ENCODE measurements at regions of chr1 and their contacts with region 1.

Region 1: GRCh38 chr1:39973503-39974135 is 18.7 kb downstream of the MFSD2A start:
- DNase-seq: peak; percentile 82
- ATAC-seq: peak; percentile 80
- H3K4me3 ChIP-seq: no peak overlapping the region
- H3K4me3 Mint-ChIP-seq: peak overlapping the region; percentile 14
- H3K27ac ChIP-seq: no peak overlapping the region
- H3K27ac Mint-ChIP-seq: no peak overlapping the region
- H3K4me1 ChIP-seq: peaks cover 5 to 7% of the 10 kb centered on the region in 2 donors
- H3K4me1 Mint-ChIP-seq: peaks cover 8% of the 10 kb centered on the region
- H3K27me3 ChIP-seq: no peaks in the 10 kb centered on the region
- H3K27me3 Mint-ChIP-seq: no peaks in the 10 kb centered on the region
- CTCF ChIP-seq: peak; percentile 97

Region 2: GRCh38 chr1:39609618-39610331 is 363.8 kb before region 1 on chr1:
- CTCF ChIA-PET with region 1: interaction called, 5 read pairs
- POLR2A ChIA-PET with region 1: no interaction called
- intact Hi-C with region 1: loop called (anchors 10 kb)
- DNase-seq: peak; percentile 79
- ATAC-seq: peak; percentile 72
- H3K4me3 ChIP-seq: no peak overlapping the region
- H3K4me3 Mint-ChIP-seq: no peak overlapping the region
- H3K27ac ChIP-seq: no peak overlapping the region
- H3K27ac Mint-ChIP-seq: no peak overlapping the region
- H3K4me1 ChIP-seq: peaks cover 0 to 10% of the 10 kb centered on the region in 2 donors
- H3K4me1 Mint-ChIP-seq: peaks cover 10% of the 10 kb centered on the region
- H3K27me3 ChIP-seq: peaks cover 0 to 8% (median 0%) of the 10 kb centered on the region in 4 experiments
- H3K27me3 Mint-ChIP-seq: peaks cover 11% of the 10 kb centered on the region
- CTCF ChIP-seq: peak; percentile 76

Region 3: GRCh38 chr1:39901698-39902459 is 71.7 kb before region 1 on chr1 and contains the start of gene MYCL:
- CTCF ChIA-PET with region 1: interaction called, 26 read pairs
- POLR2A ChIA-PET with region 1: no interaction called
- intact Hi-C with region 1: no loop called
- DNase-seq: peak; percentile 80
- ATAC-seq: peak; percentile 82
- H3K4me3 ChIP-seq: peak within 1 kb of the TSS; percentile 21 to 71 (median 61)
- H3K4me3 Mint-ChIP-seq: peak within 1 kb of the TSS; percentile 85
- H3K27ac ChIP-seq: no peak within 1 kb of the TSS
- H3K27ac Mint-ChIP-seq: peak within 1 kb of the TSS; percentile 20
- H3K4me1 ChIP-seq: peaks cover 14 to 20% of the 10 kb centered on the region in 2 donors
- H3K4me1 Mint-ChIP-seq: peaks cover 6% of the 10 kb centered on the region
- H3K27me3 ChIP-seq: peaks cover 0 to 71% (median 25%) of the 10 kb centered on the region in 4 experiments
- H3K27me3 Mint-ChIP-seq: peaks cover 47% of the 10 kb centered on the region
- CTCF ChIP-seq: peak; percentile 77
- total RNA-seq, gene MYCL: 0.49 and 0.62 TPM in 2 replicates

Region 4: DNA sequence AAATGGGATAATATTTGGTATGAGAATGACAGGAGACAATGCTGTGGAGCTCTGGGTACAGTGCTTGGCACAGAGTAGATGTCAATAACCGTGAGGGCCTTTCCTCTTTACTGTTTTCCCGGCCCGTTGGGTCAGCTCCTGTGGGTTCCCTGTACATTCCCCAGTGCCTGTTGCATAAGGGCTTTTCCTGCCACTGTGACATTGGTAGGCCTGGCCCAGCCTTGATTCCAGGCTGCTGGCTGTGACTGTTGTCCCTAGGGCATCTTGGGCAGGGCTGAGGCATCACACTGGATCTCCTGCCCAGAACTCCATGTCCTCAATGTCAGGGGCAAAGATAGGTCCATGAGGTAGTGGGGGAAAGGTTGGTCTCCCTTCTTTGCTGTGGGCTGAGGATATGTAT is 46.1 kb before region 1 on chr1:
- CTCF ChIA-PET with region 1: interaction called, 334 read pairs
- POLR2A ChIA-PET with region 1: no interaction called
- intact Hi-C with region 1: no loop called
- DNase-seq: no peak
- ATAC-seq: no peak
- H3K4me3 ChIP-seq: no peak overlapping the region
- H3K4me3 Mint-ChIP-seq: no peak overlapping the region
- H3K27ac ChIP-seq: no peak overlapping the region
- H3K27ac Mint-ChIP-seq: no peak overlapping the region
- H3K4me1 ChIP-seq: peaks cover 6 to 13% of the 10 kb centered on the region in 2 donors
- H3K4me1 Mint-ChIP-seq: no peaks in the 10 kb centered on the region
- H3K27me3 ChIP-seq: peaks cover 0 to 4% (median 0%) of the 10 kb centered on the region in 4 experiments
- H3K27me3 Mint-ChIP-seq: peaks cover 3% of the 10 kb centered on the region
- CTCF ChIP-seq: no peak

Region 5: DNA sequence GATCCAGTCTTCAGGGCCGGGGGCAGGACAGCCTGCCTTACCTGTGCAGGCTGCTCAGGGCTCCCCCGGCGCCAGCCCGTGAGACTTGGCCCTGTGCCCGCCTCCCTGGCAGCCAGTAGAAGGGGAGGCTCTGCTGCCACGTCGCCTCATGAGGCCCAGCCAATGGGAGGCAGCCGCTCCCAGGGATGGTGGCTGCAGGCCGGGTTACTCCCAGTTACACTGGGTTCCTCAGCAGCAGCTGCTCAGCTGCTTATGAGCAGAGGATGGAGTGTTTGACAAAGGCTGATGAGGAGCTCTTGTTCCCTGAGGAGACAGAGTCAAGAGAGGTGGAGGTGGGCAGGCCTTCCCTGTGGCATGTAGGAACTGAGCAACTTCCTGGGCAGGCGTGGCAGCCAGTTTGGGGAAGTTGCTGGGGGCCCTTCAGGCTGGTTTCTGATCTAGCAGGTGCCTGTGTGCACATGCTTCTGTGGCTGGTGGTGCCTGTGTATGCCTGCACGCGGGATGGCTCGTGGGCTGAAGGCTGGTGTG is 13.1 kb before region 1 on chr1:
- CTCF ChIA-PET with region 1: interaction called, 15 read pairs
- POLR2A ChIA-PET with region 1: no interaction called
- intact Hi-C with region 1: loop called (anchors 2 kb)
- DNase-seq: peak; percentile 88
- ATAC-seq: peak; percentile 95
- H3K4me3 ChIP-seq: peak overlapping the region; percentile 6 to 34 (median 26)
- H3K4me3 Mint-ChIP-seq: peak overlapping the region; percentile 77
- H3K27ac ChIP-seq: peak overlapping the region; percentile 71 to 73
- H3K27ac Mint-ChIP-seq: peak overlapping the region; percentile 93
- H3K4me1 ChIP-seq: peaks cover 25 to 46% of the 10 kb centered on the region in 2 donors
- H3K4me1 Mint-ChIP-seq: peaks cover 47% of the 10 kb centered on the region
- H3K27me3 ChIP-seq: no peaks in the 10 kb centered on the region
- H3K27me3 Mint-ChIP-seq: no peaks in the 10 kb centered on the region
- CTCF ChIP-seq: no peak

Measured in B cell (primary cell).